A673 (cell line): ENCODE measurements at regions of chr6 and their contacts with region 1.

Region 1: DNA sequence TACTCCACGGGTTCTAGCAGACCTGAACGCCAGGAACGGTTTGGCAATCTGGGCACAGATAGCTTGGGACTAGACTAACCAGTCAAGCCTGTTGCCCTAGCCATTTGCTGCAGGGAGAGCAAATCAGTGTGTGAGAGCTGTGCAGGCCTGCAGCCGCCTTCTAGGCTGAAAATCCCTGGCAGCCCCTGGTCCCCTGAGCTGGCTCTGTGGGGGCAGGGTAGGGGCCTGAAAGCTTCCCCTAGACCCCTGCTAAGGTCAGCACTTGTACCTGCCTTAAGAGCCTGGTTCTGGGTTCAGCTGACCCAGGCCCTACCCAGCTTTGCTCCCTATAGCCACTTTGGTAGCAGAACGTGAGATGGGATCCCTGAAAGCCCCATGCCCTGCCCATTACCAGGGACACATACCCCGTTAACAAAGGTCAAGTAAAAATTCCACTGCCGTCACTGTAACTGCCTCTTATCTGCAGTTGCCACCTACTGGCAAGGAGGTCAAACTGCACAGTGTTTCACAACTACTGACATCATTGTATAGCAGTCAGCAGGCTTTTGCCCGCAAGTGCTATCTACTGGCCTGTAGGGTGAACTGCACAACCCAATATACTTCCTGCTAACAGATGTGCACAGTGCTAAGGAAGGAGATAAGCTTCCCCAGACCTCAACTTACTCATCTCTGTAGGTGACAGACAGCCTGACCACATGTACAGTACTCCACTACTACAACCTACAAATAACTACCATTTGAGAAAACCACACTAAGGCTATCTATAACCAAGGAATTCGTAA is 95.1 kb upstream of the OLIG3 start:
- DNase-seq: peak; percentile 76
- H3K4me3 ChIP-seq: no peak overlapping the region
- H3K27ac ChIP-seq: no peak overlapping the region
- H3K4me1 ChIP-seq: no peaks in the 10 kb centered on the region
- H3K27me3 ChIP-seq: no peaks in the 10 kb centered on the region
- CTCF ChIP-seq: peak; percentile 58

Region 2: DNA sequence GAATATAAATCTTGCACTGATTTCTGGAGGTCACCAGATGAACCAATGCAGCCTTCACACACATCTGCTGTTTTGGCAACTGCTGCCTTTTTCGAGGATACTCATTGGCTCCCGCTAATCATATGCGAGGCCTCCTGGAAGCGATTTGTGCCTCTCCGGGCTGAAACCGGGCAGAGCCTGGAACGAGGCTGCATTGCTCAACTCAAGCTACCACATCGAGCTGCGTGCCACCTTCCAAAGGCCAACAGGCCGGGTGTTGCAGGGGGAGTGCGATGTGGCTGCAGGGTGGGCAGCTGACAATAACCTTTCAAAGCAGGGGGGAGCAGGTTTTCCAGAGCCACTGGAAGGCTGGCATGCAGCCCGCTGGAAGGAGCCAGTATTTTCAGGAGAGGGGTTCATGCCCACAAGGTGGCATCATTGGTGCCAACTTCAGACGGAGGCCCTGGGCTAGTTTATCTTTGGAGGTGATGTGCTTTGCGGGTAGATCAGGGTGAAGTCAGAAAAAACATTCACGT is 247.5 kb before region 1 on chr6:
- CTCF ChIA-PET with region 1: interaction called, 3 read pairs
- POLR2A ChIA-PET with region 1: no interaction called
- intact Hi-C with region 1: loop called (anchors 5 kb)
- DNase-seq: peak; percentile 57
- H3K4me3 ChIP-seq: no peak overlapping the region
- H3K27ac ChIP-seq: no peak overlapping the region
- H3K4me1 ChIP-seq: peaks cover 4% of the 10 kb centered on the region
- H3K27me3 ChIP-seq: peaks cover 18% of the 10 kb centered on the region
- CTCF ChIP-seq: peak; percentile 56

Region 3: DNA sequence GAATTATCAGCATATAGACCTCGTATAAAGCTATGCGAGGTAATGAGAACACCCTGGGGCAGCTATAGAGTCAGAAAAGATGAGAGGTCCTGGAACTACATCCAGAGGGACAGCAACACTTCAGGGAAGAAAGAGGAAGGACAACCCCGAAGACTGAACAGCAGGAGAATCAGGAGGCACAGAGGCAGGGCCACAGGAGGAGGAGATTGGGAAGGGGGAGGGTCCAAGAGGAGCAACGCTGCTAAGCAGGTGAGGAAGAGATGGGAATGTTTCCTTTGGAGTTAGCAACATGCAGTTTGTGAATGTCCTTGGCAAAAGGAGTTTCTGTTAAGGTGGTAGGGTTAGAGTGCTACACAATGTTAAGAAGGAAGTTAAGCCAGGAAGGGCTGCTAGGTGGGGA is 15.5 kb before region 1 on chr6:
- CTCF ChIA-PET with region 1: no interaction called
- POLR2A ChIA-PET with region 1: no interaction called
- intact Hi-C with region 1: no loop called
- DNase-seq: no peak
- H3K4me3 ChIP-seq: no peak overlapping the region
- H3K27ac ChIP-seq: no peak overlapping the region
- H3K4me1 ChIP-seq: no peaks in the 10 kb centered on the region
- H3K27me3 ChIP-seq: peaks cover 32% of the 10 kb centered on the region
- CTCF ChIP-seq: no peak